Colonic mucosa (tissue), 4 donors: ENCODE measurements at regions of chr18 and their contacts with region 1.

Region 1: GRCh38 chr18:3281456-3282400 is 19.8 kb downstream of the MYL12B start:
- DNase-seq: no peak
- H3K4me3 ChIP-seq: no peak overlapping the region
- H3K27ac ChIP-seq: no peak overlapping the region
- H3K4me1 ChIP-seq: no peaks in the 10 kb centered on the region
- H3K27me3 ChIP-seq: no peaks in the 10 kb centered on the region
- CTCF ChIP-seq: peak; percentile 71

Region 2: DNA sequence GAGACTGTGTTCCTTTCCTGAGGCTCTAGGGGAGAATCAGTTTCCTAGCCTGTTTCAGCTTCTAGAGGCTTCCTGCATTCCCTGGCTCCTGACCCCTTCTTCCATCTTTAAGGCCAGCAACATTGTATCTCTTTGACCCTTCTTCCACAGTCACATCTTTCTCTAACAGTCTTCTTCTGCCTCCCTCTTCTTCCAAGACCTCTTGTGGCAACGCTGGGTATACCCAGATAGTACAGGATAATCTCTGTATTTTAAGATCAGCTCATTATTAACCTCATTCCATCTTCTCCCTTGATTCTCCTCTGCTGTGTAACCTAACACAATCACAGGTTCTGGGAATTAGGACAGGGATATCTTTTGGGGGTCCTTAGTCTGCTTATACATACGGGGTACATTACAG is 43.0 kb before region 1 on chr18:
- intact Hi-C with region 1: no loop called
- DNase-seq: no peak
- H3K4me3 ChIP-seq: no peak overlapping the region
- H3K27ac ChIP-seq: no peak overlapping the region
- H3K4me1 ChIP-seq: no peaks in the 10 kb centered on the region
- H3K27me3 ChIP-seq: no peaks in the 10 kb centered on the region
- CTCF ChIP-seq: no peak

Region 3: GRCh38 chr18:3340015-3340681 is 58.4 kb after region 1 on chr18:
- intact Hi-C with region 1: loop called (anchors 10 kb)
- DNase-seq: no peak
- H3K4me3 ChIP-seq: no peak overlapping the region
- H3K27ac ChIP-seq: no peak overlapping the region
- H3K4me1 ChIP-seq: no peaks in the 10 kb centered on the region
- H3K27me3 ChIP-seq: no peaks in the 10 kb centered on the region
- CTCF ChIP-seq: no peak

Region 4: GRCh38 chr18:3454365-3455089 is 172.8 kb after region 1 on chr18:
- intact Hi-C with region 1: loop called (anchors 5 kb)
- DNase-seq: peak; percentile 71
- H3K4me3 ChIP-seq: peak overlapping the region; percentile 68
- H3K27ac ChIP-seq: peak overlapping the region; percentile 100
- H3K4me1 ChIP-seq: peaks cover 13% of the 10 kb centered on the region
- H3K27me3 ChIP-seq: no peaks in the 10 kb centered on the region
- CTCF ChIP-seq: peak; percentile 40

Region 5: GRCh38 chr18:3585656-3586509 is 304.2 kb after region 1 on chr18:
- intact Hi-C with region 1: loop called (anchors 5 kb)
- DNase-seq: peak; percentile 92
- H3K4me3 ChIP-seq: no peak overlapping the region
- H3K27ac ChIP-seq: no peak overlapping the region
- H3K4me1 ChIP-seq: no peaks in the 10 kb centered on the region
- H3K27me3 ChIP-seq: no peaks in the 10 kb centered on the region
- CTCF ChIP-seq: peak; percentile 72

Region 6: DNA sequence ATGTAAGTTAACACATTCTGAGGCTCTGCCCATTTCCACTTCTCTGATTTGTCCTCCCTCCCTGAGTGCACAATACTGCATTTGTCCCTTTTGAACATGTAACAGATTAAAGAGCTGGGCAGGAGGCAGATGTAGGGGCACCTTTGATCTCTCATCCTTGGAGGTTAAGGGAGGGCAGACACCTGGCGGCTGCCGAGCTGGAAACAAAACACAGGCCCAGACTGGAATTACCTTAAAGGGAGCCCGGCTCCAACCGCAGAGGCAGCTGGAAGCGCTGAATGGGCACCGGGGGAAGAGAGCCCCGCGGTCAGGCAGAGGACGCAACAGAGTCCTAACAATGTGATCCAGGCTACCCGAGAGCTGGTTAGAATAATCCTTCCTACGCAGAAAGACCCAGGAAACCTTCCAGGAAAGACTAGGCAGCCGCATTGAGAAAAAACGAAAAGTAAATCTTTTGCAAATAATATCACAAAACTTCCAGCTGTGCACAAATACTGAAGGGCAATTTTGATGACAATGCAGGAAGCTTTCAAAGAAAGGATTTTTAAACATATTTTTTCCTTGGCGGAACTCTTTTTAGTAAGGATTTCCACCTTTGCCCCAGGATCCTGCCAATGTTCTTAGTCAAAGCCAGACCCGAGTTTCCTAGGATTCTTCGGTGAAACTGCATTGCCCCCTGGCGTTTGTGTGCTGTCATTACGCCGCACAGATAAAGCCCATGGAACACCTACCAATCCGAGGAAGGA is 384.2 kb after region 1 on chr18:
- intact Hi-C with region 1: loop called (anchors 5 kb)
- DNase-seq: peak; percentile 91
- H3K4me3 ChIP-seq: no peak overlapping the region
- H3K27ac ChIP-seq: peak overlapping the region; percentile 72
- H3K4me1 ChIP-seq: peaks cover 5% of the 10 kb centered on the region
- H3K27me3 ChIP-seq: no peaks in the 10 kb centered on the region
- CTCF ChIP-seq: peak; percentile 91

Region 7: DNA sequence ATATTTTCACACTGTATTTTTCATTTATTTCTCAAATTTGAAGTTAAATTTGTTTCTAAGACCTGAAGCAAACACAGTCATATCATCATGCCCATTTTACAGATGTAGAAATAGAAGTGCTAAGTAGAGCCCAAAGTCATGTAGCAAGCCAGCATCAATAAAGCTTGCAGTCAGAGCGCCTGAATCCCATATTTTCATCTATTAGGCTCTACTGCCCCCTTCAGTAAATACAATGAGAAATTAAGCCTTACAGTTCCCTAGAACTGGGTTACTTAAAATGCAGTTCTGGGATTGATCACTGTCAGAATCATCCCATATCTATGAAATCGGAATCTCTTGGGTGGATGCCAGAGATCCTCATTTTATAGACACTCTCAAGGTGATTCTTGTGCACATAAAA is 588.1 kb after region 1 on chr18:
- intact Hi-C with region 1: loop called (anchors 10 kb)
- DNase-seq: no peak
- H3K4me3 ChIP-seq: no peak overlapping the region
- H3K27ac ChIP-seq: no peak overlapping the region
- H3K4me1 ChIP-seq: no peaks in the 10 kb centered on the region
- H3K27me3 ChIP-seq: no peaks in the 10 kb centered on the region
- CTCF ChIP-seq: peak; percentile 27

Region 8: DNA sequence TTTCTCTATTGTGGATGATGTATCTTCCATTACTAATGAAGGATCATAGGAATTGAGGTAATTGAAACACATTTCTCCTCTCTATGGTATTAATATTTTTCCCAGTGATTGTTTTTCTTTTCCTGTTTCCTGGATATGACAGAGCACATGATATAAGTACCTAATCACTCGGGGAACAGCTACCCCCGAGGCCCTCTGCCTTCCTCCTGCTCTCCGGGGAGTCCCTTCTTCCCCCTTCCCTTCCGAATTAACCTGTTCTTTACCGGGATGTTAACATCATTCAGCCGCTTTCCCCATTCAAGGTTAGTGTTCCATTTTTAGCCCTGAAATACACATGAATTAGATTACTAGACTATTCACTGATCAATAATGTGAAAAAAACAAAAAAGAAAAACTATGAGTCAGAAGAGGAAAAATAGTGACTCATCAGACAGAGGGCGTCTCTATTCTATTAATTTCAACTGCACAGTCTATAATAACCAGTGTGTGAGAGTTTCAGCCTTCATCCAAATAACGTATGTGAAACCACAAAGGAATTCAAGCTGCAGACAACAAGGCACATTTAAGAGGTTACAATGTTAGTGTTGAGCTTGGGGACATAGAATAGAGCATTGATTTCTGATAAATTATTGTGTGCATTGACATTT is 722.6 kb after region 1 on chr18:
- intact Hi-C with region 1: loop called (anchors 5 kb)
- DNase-seq: no peak
- H3K4me3 ChIP-seq: no peak overlapping the region
- H3K27ac ChIP-seq: no peak overlapping the region
- H3K4me1 ChIP-seq: no peaks in the 10 kb centered on the region
- H3K27me3 ChIP-seq: no peaks in the 10 kb centered on the region
- CTCF ChIP-seq: no peak